ENCODE measurements at regions of chr9 and their contacts with region 1.

Region 1: GRCh38 chr9:97921959-97922724 is at the start of gene TRMO:
- DNase-seq: peak; percentile 100
- ATAC-seq: peak; percentile 78
- H3K4me3 ChIP-seq: peak within 1 kb of the TSS; percentile 47 to 89 (median 77)
- H3K4me3 Mint-ChIP-seq: peak within 1 kb of the TSS; percentile 87
- H3K27ac ChIP-seq: peak within 1 kb of the TSS; percentile 98 to 99
- H3K27ac Mint-ChIP-seq: peak within 1 kb of the TSS; percentile 97
- H3K4me1 ChIP-seq: peaks cover 26 to 32% of the 10 kb centered on the region in 2 donors
- H3K4me1 Mint-ChIP-seq: peaks cover 54% of the 10 kb centered on the region
- H3K27me3 ChIP-seq: no peaks in the 10 kb centered on the region
- H3K27me3 Mint-ChIP-seq: no peaks in the 10 kb centered on the region
- CTCF ChIP-seq: peak; percentile 74
- total RNA-seq, gene TRMO: 40.2 and 42.3 TPM in 2 replicates

Region 2: GRCh38 chr9:97411789-97412625 is 510.1 kb before region 1 on chr9 and contains the start of gene TDRD7:
- CTCF ChIA-PET with region 1: no interaction called
- POLR2A ChIA-PET with region 1: no interaction called
- intact Hi-C with region 1: loop called (anchors 5 kb)
- DNase-seq: peak; percentile 96
- ATAC-seq: peak; percentile 91
- H3K4me3 ChIP-seq: peak within 1 kb of the TSS; percentile 57 to 92 (median 85)
- H3K4me3 Mint-ChIP-seq: peak within 1 kb of the TSS; percentile 77
- H3K27ac ChIP-seq: peak within 1 kb of the TSS; percentile 61 to 79
- H3K27ac Mint-ChIP-seq: peak within 1 kb of the TSS; percentile 82
- H3K4me1 ChIP-seq: peaks cover 18% of the 10 kb centered on the region in 2 donors
- H3K4me1 Mint-ChIP-seq: peaks cover 34% of the 10 kb centered on the region
- H3K27me3 ChIP-seq: peaks cover 0 to 3% (median 0%) of the 10 kb centered on the region in 4 experiments
- H3K27me3 Mint-ChIP-seq: peaks cover 10% of the 10 kb centered on the region
- CTCF ChIP-seq: peak; percentile 100
- total RNA-seq, gene TDRD7: 19.7 and 20.6 TPM in 2 replicates

Region 3: DNA sequence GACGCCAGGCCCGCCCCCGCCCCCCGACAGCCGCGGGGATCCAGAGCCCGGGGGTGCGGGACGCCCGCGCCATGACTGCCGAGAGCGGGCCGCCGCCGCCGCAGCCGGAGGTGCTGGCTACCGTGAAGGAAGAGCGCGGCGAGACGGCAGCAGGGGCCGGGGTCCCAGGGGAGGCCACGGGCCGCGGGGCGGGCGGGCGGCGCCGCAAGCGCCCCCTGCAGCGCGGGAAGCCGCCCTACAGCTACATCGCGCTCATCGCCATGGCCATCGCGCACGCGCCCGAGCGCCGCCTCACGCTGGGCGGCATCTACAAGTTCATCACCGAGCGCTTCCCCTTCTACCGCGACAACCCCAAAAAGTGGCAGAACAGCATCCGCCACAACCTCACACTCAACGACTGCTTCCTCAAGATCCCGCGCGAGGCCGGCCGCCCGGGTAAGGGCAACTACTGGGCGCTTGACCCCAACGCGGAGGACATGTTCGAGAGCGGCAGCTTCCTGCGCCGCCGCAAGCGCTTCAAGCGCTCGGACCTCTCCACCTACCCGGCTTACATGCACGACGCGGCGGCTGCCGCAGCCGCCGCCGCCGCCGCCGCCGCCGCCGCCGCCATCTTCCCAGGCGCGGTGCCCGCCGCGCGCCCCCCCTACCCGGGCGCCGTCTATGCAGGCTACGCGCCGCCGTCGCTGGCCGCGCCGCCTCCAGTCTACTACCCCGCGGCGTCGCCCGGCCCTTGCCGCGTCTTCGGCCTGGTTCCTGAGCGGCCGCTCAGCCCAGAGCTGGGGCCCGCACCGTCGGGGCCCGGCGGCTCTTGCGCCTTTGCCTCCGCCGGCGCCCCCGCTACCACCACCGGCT is 68.1 kb before region 1 on chr9:
- CTCF ChIA-PET with region 1: interaction called, 3 read pairs
- POLR2A ChIA-PET with region 1: no interaction called
- intact Hi-C with region 1: loop called (anchors 5 kb)
- DNase-seq: peak; percentile 84
- ATAC-seq: peak; percentile 76
- H3K4me3 ChIP-seq: peak overlapping the region in 4 of 5 experiments; percentile 37 to 61 (median 46)
- H3K4me3 Mint-ChIP-seq: peak overlapping the region; percentile 89
- H3K27ac ChIP-seq: no peak overlapping the region
- H3K27ac Mint-ChIP-seq: peak overlapping the region; percentile 77
- H3K4me1 ChIP-seq: peaks cover 34 to 54% of the 10 kb centered on the region in 2 donors
- H3K4me1 Mint-ChIP-seq: peaks cover 18% of the 10 kb centered on the region
- H3K27me3 ChIP-seq: peaks cover 0 to 91% (median 76%) of the 10 kb centered on the region in 4 experiments
- H3K27me3 Mint-ChIP-seq: peaks cover 62% of the 10 kb centered on the region
- CTCF ChIP-seq: peak; percentile 39

Region 4: DNA sequence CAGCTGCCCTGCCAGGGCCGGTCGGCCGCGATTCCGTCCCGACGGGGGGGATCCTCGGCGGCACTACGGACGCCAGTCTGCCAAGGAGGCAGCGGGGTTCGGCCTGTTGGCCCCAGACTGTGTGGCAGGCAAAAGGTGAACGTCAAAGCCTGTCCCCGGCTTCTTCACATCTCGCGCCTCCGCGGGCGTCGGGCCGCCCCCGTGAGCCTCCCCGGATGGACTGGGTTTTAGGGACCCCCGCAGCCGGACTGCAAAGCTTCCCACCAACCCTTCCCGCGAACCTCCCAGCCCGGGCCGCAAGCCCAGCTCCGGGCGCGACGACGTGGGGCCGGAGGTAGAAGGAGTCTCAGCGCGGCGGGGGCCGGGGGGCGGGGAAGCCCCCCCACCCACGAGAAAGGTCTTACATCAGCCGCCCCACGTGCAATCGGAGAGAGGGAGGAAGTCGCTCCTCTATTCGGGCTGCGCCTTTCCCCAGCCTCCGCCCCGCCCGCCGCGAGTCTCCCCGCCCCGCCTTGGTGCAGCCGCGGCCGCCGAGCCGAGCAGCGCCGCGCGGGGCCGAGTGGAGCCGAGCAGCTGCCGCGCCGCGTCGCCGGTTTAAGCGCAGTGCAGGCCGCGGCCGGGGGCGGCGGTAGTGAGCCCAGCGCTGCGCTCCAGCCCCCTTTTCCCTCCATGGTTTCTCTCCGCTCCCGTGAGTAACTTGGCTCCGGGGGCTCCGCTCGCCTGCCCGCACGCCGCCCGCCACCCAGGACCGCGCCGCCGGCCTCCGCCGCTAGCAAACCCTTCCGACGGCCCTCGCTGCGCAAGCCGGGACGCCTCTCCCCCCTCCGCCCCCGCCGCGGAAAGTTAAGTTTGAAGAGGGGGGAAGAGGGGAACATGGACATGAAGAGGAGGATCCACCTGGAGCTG is 60.8 kb after region 1 on chr9 and contains the start of gene ANP32B:
- CTCF ChIA-PET with region 1: interaction called, 45 read pairs
- POLR2A ChIA-PET with region 1: interaction called, 40 read pairs
- intact Hi-C with region 1: loop called (anchors 1 kb)
- DNase-seq: peak; percentile 96
- ATAC-seq: peak; percentile 79
- H3K4me3 ChIP-seq: peak within 1 kb of the TSS; percentile 25 to 97 (median 84)
- H3K4me3 Mint-ChIP-seq: peak within 1 kb of the TSS; percentile 92
- H3K27ac ChIP-seq: peak within 1 kb of the TSS; percentile 90 to 93
- H3K27ac Mint-ChIP-seq: peak within 1 kb of the TSS; percentile 98
- H3K4me1 ChIP-seq: peaks cover 28 to 34% of the 10 kb centered on the region in 2 donors
- H3K4me1 Mint-ChIP-seq: peaks cover 29% of the 10 kb centered on the region
- H3K27me3 ChIP-seq: no peaks in the 10 kb centered on the region
- H3K27me3 Mint-ChIP-seq: no peaks in the 10 kb centered on the region
- CTCF ChIP-seq: peak; percentile 96
- total RNA-seq, gene ANP32B: 138 and 150 TPM in 2 replicates

Region 5: DNA sequence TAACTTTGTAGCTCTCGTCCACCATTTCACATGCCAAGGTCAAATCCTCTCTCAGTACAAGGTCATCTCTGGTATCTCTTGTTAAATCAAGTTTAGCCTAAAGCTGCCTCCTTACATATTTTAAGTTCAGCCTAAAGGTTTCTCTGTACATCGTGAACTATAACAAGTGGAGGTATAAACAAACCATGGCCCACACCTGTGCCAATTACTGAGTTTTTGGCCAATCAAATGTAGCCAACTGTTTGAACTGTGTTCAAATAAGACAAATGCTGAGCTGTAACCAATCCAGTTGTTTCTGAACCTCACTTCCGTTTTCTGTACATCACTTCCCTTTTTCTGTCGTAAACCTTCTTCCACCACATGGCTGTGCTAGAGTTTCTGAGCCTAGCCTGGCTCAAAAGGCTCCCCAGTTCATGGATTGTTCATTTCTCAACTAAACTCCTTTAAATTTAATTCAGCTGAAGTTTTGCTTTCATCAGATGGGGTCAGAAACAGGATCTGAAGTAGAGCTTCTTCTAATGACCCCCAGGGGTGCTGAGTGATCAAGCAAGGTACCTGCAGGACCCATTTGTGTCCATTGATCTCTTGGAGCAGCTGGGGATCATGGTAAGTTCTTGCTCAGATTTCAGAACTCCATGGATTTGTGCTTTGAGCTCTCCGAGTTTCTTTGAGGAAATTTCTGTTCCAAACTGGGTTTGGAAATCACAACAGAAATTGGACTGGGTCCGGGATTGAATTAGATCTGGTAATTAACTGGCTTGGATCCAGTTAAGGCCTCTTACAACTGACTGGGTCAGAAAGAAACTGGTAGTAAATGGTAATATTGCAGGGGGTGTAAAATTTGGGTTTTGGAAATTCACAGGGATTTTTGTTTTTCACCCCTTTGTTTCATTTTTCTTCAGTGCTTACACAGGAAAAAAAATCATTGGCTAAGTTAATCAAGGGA is 123.4 kb after region 1 on chr9:
- CTCF ChIA-PET with region 1: interaction called, 19 read pairs
- POLR2A ChIA-PET with region 1: interaction called, 6 read pairs
- intact Hi-C with region 1: loop called (anchors 1 kb)
- DNase-seq: peak; percentile 83
- ATAC-seq: peak; percentile 77
- H3K4me3 ChIP-seq: peak overlapping the region; percentile 15 to 74 (median 48)
- H3K4me3 Mint-ChIP-seq: peak overlapping the region; percentile 63
- H3K27ac ChIP-seq: peak overlapping the region; percentile 56 to 80
- H3K27ac Mint-ChIP-seq: peak overlapping the region; percentile 84
- H3K4me1 ChIP-seq: peaks cover 33 to 35% of the 10 kb centered on the region in 2 donors
- H3K4me1 Mint-ChIP-seq: peaks cover 39% of the 10 kb centered on the region
- H3K27me3 ChIP-seq: no peaks in the 10 kb centered on the region
- H3K27me3 Mint-ChIP-seq: no peaks in the 10 kb centered on the region
- CTCF ChIP-seq: peak; percentile 13

Region 6: GRCh38 chr9:98255578-98256296 is 333.6 kb after region 1 on chr9 and contains the start of gene TBC1D2:
- CTCF ChIA-PET with region 1: interaction called, 33 read pairs
- POLR2A ChIA-PET with region 1: interaction called, 12 read pairs
- intact Hi-C with region 1: loop called (anchors 1 kb)
- DNase-seq: peak; percentile 98
- ATAC-seq: peak; percentile 89
- H3K4me3 ChIP-seq: peak within 1 kb of the TSS; percentile 89 to 98 (median 93)
- H3K4me3 Mint-ChIP-seq: peak within 1 kb of the TSS; percentile 98
- H3K27ac ChIP-seq: peak within 1 kb of the TSS; percentile 83 to 92
- H3K27ac Mint-ChIP-seq: peak within 1 kb of the TSS; percentile 100
- H3K4me1 ChIP-seq: peaks cover 11 to 21% of the 10 kb centered on the region in 2 donors
- H3K4me1 Mint-ChIP-seq: peaks cover 15% of the 10 kb centered on the region
- H3K27me3 ChIP-seq: no peaks in the 10 kb centered on the region
- H3K27me3 Mint-ChIP-seq: no peaks in the 10 kb centered on the region
- CTCF ChIP-seq: peak; percentile 14
- total RNA-seq, gene TBC1D2: 4.3 and 5.0 TPM in 2 replicates

Measured in B cell (primary cell).